Dorsolateral prefrontal cortex (tissue), 120 donors: ENCODE measurements at regions of chr22 and their contacts with region 1.

Region 1: DNA sequence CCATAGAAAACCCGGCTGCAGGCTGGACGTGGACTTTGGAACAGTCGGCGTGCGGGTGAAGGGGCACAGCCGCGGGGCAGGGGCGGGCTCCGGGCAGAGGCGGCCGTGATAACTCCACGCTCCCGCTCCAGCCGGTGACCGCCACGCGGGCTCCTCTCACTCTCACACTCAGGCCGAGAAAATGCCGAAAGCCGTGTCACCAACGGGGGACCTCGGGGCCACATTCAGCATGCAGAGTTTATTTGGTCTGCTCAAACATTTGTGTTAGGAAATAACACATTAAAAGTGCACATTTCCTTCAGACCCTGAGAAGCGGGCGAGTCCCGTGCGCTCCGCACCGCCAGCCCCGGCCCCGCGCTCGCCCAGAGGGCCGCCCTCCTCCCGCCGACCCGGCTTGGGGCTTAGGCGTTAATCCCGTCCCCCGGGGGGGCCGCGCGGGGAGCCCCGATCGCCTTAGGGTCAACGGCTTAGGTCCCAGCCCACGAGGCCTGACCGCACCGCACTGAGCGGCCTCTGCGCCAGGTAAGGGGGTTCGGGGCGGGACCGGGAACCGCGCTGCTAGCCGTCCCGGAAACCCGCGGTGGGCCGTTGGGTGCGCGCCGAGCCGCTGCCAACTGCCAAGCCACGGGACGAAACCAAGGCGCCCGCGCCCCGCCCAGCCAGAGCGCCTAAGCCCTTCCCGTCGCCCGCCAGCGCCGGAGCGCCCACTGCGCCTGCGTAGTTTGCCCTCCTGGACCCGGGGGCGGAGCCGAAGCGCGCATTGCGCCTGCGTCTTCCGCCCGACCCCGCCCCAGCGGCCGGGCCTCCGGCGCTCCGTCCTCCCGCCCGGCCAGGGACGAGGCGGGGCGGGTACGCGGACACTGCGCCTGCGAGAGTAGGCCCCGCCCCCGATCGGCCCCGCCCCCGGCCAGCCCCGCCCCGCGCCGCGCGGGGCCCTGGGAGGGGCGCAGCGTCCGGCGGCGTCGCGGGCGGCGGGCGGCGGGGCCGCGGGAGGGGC is at the start of gene ZBED4:
- DNase-seq: peak; percentile 86 to 98 (median 92)
- H3K4me3 ChIP-seq: peak within 1 kb of the TSS; percentile 59 to 99 (median 90)
- H3K27ac ChIP-seq: peak within 1 kb of the TSS; percentile 42 to 95 (median 86)
- H3K27me3 ChIP-seq: peaks cover 0 to 29% (median 21%) of the 10 kb centered on the region in 45 donors
- CTCF ChIP-seq: peak in 18 of 56 donors; percentile 14 to 46 (median 26)
- total RNA-seq, gene ZBED4: 4.7 to 8.0 (median 6.5) TPM

Region 2: DNA sequence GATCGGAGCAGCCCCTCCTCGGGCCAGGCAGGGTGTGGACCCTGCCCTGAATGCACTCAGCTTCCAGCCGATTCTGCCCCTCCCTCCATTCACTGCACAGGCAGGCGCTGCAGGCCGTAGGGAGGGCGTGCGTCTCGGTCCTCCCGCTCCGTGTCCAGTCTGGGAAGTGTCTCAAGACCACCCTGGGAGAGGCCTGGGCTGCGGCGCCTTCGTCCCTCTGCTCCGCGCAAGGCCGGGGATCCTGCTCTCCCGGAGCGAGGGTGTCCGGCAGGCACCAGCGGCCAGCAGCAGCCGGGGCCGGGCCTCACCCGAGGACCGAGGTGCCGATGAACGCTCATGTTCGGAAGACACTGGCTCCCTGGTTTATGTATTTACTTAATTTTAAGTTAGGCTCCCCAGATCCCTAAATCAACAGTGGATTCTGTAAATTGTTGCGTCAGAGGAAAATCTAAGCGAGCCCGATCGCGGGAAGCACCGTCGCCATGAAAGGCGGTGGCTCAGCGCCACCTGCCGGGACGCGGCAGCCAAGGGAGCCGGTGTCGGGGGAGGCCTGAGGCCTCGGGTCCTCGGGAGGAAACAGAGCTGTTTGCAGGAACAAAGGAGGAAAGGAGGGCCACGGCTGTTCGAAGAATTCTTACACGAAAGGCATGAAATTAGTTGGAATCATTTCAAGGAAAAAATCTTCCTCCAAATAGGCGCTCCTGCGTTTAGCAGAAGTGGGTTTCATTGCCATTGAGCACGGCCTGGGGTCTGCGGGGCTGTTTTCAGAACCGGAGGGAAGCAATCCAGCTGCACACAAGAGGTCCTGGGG is 220.8 kb before region 1 on chr22:
- intact Hi-C with region 1: no loop called
- DNase-seq: peak; percentile 57 to 86 (median 68)
- H3K4me3 ChIP-seq: peak overlapping the region; percentile 31 to 75 (median 58)
- H3K27ac ChIP-seq: peak overlapping the region in 42 of 59 donors; percentile 4 to 88 (median 49)
- H3K27me3 ChIP-seq: no peaks in the 10 kb centered on the region
- CTCF ChIP-seq: peak; percentile 72 to 99 (median 93)

Region 3: DNA sequence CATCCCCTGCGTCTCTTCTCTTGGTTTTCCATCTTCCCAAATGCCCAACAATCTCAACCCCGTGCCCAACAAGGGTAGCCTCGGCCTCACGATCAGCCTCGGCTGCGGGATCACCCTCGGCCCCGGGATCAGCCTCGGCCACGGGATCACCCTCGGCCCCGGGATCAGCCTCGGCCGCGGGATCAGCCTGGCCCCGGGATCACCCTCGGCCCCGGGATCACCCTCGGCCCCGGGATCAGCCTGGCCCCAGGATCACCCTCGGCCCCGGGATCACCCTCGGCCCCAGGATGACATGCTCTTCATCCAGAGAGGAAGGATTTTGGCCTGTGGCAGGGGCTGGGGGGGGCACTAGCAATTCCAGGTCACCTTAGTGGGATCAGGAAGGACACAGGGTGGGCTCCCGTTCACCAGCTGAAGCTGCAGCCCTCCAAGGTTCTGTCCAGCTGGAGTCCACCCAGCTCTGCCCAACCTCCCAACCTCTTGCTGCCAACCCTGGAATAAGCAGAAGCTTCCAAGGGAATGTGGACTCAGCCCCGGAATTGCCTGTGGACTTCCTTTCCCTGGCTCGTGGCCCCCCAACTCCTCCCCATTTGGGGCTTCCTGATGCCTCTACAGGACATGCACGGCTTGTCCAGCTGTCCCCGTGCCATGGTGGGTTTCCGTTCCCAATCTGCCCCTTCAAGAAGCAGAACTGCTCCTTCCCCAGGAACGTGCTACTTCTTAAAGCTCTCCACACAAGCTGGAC is 58.9 kb after region 1 on chr22:
- intact Hi-C with region 1: loop called (anchors 2 to 5 kb)
- DNase-seq: no peak
- H3K4me3 ChIP-seq: no peak overlapping the region
- H3K27ac ChIP-seq: no peak overlapping the region
- H3K27me3 ChIP-seq: no peaks in the 10 kb centered on the region
- CTCF ChIP-seq: no peak

Region 4: GRCh38 chr22:49917974-49918910 is 65.0 kb after region 1 on chr22 and contains the starts of genes ALG12 and CRELD2:
- intact Hi-C with region 1: loop called (anchors 2 to 5 kb)
- DNase-seq: peak; percentile 98 to 100 (median 99)
- H3K4me3 ChIP-seq: peak within 1 kb of the TSS; percentile 62 to 97 (median 89)
- H3K27ac ChIP-seq: peak within 1 kb of the TSS in 58 of 59 donors; percentile 65 to 99 (median 93)
- H3K27me3 ChIP-seq: no peaks in the 10 kb centered on the region
- CTCF ChIP-seq: peak in 27 of 56 donors; percentile 6 to 53 (median 26)
- total RNA-seq, gene ALG12: 9.4 to 31.2 (median 15.9) TPM
- total RNA-seq, gene CRELD2: 19.4 to 50.3 (median 29.6) TPM